ENCODE measurements at regions of chr10 and their contacts with region 1.

Region 1: DNA sequence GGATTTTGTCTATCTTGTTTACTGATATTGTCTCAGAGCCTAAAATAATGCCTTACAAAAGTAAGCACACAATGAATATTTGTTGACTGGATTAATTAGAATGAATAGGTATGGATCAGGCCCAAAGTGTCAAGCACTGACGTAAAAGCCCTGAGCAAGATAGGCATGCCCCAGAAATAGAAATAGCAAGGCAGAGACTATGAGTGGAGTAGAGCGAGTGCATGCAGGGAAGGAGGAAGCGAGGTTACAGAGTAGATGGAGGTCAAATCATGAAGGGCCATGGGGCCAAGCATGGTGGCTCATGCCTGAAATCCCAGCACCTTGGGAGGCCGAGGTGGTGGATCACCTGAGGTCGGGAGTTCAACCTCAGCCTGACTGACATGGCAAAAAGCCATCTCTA is 51.6 kb upstream of the SFTPD start:
- DNase-seq: no peak
- H3K4me3 ChIP-seq: no peak overlapping the region
- H3K27me3 ChIP-seq: peaks cover 7% of the 10 kb centered on the region
- CTCF ChIP-seq: no peak

Region 2: GRCh38 chr10:80025281-80025680 is 24.7 kb after region 1 on chr10:
- CTCF ChIA-PET with region 1: no interaction called
- POLR2A ChIA-PET with region 1: interaction called, 14 read pairs
- DNase-seq: no peak
- H3K4me3 ChIP-seq: no peak overlapping the region
- H3K27me3 ChIP-seq: no peaks in the 10 kb centered on the region
- CTCF ChIP-seq: no peak

Region 3: GRCh38 chr10:80090121-80090520 is 89.6 kb after region 1 on chr10:
- CTCF ChIA-PET with region 1: no interaction called
- POLR2A ChIA-PET with region 1: no interaction called
- DNase-seq: no peak
- H3K4me3 ChIP-seq: no peak overlapping the region
- H3K27me3 ChIP-seq: no peaks in the 10 kb centered on the region
- CTCF ChIP-seq: no peak

Region 4: GRCh38 chr10:80344276-80344675 is 343.7 kb after region 1 on chr10:
- CTCF ChIA-PET with region 1: no interaction called
- POLR2A ChIA-PET with region 1: interaction called, 22 read pairs
- DNase-seq: no peak
- H3K4me3 ChIP-seq: no peak overlapping the region
- H3K27me3 ChIP-seq: no peaks in the 10 kb centered on the region
- CTCF ChIP-seq: no peak

Measured in BJ (cell line).